MCF 10A (cell line): ENCODE measurements at regions of chr19 and their contacts with region 1.

Region 1: DNA sequence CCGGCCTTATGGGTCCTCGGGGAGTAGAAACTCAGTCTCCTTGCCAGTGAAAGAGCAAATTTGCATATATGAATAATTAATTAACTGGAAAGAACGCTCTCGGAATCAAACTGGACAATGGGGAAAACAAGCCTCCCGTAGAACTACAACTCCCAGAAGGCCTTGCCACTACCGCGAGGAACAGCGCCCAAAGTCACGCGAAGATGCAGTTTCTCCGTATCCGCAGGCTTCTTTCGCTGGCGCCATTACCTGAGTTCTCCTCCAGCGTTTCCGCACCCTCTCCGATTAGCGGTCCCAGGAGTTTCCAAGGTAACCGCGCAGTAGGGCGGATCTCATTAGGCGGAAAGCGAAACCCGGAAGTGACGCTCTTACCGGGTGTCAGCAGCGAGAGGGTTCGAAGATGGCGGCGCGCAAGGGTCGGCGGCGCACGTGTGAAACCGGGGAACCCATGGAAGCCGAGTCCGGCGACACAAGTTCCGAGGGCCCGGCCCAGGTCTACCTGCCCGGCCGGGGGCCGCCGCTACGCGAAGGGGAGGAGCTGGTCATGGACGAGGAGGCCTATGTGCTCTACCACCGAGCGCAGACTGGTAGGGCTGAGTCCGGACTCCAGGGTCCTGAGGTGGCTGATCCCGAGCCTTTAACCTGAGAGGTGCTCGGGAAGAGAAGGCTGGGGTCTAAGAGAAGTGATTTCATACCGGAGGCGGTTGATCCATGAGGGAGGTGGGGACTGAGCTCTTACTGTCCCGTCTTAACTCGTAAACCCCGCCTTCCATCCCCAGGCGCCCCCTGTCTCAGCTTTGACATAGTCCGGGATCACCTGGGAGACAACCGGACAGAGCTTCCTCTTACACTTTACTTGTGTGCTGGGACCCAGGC is at the start of gene GRWD1:
- DNase-seq: peak; percentile 98
- H3K4me3 Mint-ChIP-seq: peak within 1 kb of the TSS; percentile 93
- H3K27ac Mint-ChIP-seq: peak within 1 kb of the TSS; percentile 94
- H3K4me1 Mint-ChIP-seq: peaks cover 23% of the 10 kb centered on the region
- H3K27me3 Mint-ChIP-seq: no peaks in the 10 kb centered on the region
- CTCF ChIP-seq: peak; percentile 6
- total RNA-seq, gene GRWD1: 45.1 and 55.8 TPM in 2 replicates

Region 2: GRCh38 chr19:48321622-48322591 is 123.9 kb before region 1 on chr19:
- CTCF ChIA-PET with region 1: interaction called, 3 read pairs
- POLR2A ChIA-PET with region 1: interaction called, 4 read pairs
- intact Hi-C with region 1: loop called (anchors 2 kb)
- DNase-seq: peak; percentile 99
- H3K4me3 Mint-ChIP-seq: peak overlapping the region; percentile 95
- H3K27ac Mint-ChIP-seq: peak overlapping the region; percentile 97
- H3K4me1 Mint-ChIP-seq: peaks cover 43% of the 10 kb centered on the region
- H3K27me3 Mint-ChIP-seq: no peaks in the 10 kb centered on the region
- CTCF ChIP-seq: no peak

Region 3: DNA sequence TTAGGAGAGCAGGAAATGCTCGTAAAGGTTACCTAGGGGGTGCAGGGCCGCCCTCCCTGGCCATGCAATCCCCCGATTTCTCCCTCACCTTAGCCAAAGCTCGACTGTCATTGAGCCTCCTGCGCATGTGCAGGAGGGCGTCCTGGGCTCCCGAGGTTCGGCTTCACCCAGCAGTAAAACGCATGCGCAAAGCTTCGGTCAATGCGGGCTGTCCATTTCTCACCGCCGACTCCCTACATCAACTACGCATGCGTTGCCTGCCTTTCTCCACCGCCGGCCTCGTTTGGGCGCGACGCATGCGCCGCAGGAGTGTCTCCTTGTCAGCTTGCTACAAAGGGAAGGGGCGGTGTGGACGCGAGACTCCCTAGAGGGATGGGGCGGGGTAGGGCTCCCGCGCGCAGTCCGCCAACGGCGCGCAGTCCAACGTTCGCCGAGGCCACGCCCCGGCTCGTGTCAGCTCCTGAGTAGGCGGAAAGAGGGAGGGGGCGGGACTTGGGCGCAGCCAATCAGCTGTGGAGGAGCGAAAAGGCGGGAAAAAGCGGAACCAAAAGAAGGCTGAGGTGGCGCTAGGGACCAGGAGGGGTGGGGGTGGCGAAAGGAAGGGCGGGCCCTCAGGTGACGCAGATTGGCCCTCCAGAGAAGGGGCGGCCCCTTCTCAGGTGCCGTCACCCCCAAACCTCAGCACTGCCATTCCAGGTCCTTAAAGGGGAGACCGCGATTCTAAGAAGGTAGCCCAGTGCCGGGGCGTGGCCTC is 81.9 kb before region 1 on chr19 and contains the starts of genes SYNGR4 and TMEM143:
- CTCF ChIA-PET with region 1: no interaction called
- POLR2A ChIA-PET with region 1: interaction called, 16 read pairs
- intact Hi-C with region 1: no loop called
- DNase-seq: peak; percentile 100
- H3K4me3 Mint-ChIP-seq: peak within 1 kb of the TSS; percentile 79
- H3K27ac Mint-ChIP-seq: peak within 1 kb of the TSS; percentile 88
- H3K4me1 Mint-ChIP-seq: no peaks in the 10 kb centered on the region
- H3K27me3 Mint-ChIP-seq: no peaks in the 10 kb centered on the region
- CTCF ChIP-seq: no peak
- total RNA-seq, gene SYNGR4: not detected in 2 replicates
- total RNA-seq, gene TMEM143: 6.0 and 7.6 TPM in 2 replicates

Region 4: DNA sequence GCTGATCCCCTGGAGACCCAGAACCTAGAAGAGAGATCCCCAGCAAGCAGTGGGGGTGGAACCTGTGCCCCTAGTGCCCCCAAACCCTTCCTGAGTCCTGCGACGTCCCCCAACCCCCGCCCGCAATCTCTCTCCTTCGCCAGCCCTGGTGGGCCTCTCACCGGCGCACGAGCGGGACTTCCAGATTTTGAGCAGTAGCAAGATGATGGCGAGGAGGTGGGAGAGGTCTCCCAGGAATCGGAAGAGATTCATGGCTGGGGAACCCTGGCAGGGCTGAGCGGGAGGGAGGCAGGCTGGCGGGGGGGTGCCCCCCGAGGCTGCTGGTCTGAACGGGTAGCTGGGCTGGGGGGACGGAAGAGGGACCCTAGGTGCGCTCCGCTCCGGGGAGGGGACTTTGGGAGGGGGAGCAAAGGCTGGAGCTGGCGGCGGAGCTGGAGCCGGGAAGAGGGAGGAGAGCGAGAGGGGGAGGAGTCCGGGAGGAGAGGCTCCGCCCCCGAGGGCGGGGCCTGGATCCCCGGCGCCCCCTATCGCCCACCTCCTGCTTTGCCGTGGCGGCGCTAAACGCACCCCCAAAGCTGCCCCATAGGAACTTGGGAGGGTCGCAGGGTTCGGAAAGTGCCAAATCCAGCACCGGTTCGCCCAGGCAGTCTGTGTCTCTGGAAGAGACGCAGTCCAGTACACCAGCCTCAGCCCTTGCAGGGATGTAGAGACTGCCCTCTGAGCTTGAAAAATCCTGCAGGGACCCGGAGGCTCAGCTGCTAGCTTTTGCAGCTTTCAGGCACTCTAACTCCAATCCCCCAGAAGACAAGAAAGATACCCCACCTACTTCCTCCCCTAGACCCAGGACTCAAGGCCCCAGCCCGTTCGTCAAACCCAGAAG is 54.5 kb before region 1 on chr19 and contains the start of gene KDELR1:
- CTCF ChIA-PET with region 1: interaction called, 6 read pairs
- POLR2A ChIA-PET with region 1: interaction called, 21 read pairs
- intact Hi-C with region 1: loop called (anchors 1 kb)
- DNase-seq: peak; percentile 76
- H3K4me3 Mint-ChIP-seq: peak within 1 kb of the TSS; percentile 82
- H3K27ac Mint-ChIP-seq: peak within 1 kb of the TSS; percentile 90
- H3K4me1 Mint-ChIP-seq: peaks cover 25% of the 10 kb centered on the region
- H3K27me3 Mint-ChIP-seq: peaks cover 22% of the 10 kb centered on the region
- CTCF ChIP-seq: peak; percentile 89
- total RNA-seq, gene KDELR1: 113 and 134 TPM in 2 replicates

Region 5: DNA sequence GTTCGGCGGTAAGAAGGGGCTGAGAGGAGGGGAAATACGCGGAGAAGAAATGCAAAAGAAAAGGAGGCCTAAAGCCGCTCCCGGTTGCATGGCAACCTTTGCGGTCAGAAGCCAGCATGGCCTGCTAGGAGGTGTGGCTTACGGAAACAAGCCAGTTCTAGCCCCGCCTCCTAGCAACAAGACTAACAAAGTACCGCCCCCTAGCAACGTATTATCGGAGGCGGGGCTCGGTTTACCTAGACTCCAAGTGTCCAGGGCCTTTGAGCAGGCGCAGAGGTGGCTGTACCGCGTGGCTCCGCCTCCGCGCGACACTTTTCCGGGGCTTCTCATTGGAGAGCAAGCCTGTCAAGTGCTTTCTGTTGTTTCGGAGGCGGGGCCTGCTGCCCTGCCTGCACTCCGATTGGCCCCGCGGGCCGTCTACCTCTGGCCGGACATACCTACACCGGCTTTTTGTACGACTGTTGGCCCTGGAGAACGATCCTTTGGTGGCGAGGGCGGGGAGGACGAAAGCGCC is 23.0 kb after region 1 on chr19:
- CTCF ChIA-PET with region 1: interaction called, 4 read pairs
- POLR2A ChIA-PET with region 1: interaction called, 5 read pairs
- intact Hi-C with region 1: loop called (anchors 2 kb)
- DNase-seq: peak; percentile 100
- H3K4me3 Mint-ChIP-seq: peak overlapping the region; percentile 77
- H3K27ac Mint-ChIP-seq: peak overlapping the region; percentile 97
- H3K4me1 Mint-ChIP-seq: peaks cover 12% of the 10 kb centered on the region
- H3K27me3 Mint-ChIP-seq: no peaks in the 10 kb centered on the region
- CTCF ChIP-seq: no peak

Region 6: GRCh38 chr19:48524728-48525127 is 78.9 kb after region 1 on chr19:
- CTCF ChIA-PET with region 1: no interaction called
- POLR2A ChIA-PET with region 1: no interaction called
- intact Hi-C with region 1: no loop called
- DNase-seq: no peak
- H3K4me3 Mint-ChIP-seq: no peak overlapping the region
- H3K27ac Mint-ChIP-seq: no peak overlapping the region
- H3K4me1 Mint-ChIP-seq: no peaks in the 10 kb centered on the region
- H3K27me3 Mint-ChIP-seq: no peaks in the 10 kb centered on the region
- CTCF ChIP-seq: no peak